Motor neuron (in vitro differentiated cells): ENCODE measurements at regions of chr16 and their contacts with region 1.

Region 1: DNA sequence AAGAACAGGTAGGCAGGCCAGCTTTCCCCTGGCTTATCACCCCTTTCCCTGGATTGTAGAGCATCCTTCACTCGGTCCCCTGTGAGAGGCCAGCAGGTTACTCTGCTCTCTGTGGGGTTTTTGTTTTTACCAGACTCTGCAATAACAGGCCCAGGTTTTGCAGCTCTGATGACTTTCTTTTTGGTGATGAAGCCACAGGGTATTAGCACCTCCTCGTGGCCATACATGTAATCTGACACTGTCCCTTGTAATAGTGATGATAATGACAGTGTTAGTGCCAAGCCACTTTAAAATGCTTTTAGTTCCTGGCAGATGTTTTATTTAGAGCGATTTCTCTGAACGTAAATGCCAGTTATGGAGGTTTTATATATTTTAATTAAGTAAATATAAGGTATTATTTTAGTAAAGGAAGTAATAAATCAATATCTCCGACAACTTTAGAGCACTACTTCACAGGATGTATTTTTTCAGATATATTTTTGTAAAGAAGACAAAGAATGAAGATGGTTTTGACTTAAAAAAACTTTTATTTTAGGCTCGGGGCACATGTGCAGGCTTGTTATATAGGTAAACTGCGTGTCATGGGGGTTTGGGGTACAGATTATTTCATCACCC is 38.0 kb upstream of the CPHXL start:
- ATAC-seq: peak; percentile 90 to 99 (median 94)
- H3K4me3 ChIP-seq: no peak overlapping the region
- H3K27ac ChIP-seq: no peak overlapping the region
- H3K4me1 ChIP-seq: peaks cover 15 to 17% of the 10 kb centered on the region in 2 donors

Region 2: DNA sequence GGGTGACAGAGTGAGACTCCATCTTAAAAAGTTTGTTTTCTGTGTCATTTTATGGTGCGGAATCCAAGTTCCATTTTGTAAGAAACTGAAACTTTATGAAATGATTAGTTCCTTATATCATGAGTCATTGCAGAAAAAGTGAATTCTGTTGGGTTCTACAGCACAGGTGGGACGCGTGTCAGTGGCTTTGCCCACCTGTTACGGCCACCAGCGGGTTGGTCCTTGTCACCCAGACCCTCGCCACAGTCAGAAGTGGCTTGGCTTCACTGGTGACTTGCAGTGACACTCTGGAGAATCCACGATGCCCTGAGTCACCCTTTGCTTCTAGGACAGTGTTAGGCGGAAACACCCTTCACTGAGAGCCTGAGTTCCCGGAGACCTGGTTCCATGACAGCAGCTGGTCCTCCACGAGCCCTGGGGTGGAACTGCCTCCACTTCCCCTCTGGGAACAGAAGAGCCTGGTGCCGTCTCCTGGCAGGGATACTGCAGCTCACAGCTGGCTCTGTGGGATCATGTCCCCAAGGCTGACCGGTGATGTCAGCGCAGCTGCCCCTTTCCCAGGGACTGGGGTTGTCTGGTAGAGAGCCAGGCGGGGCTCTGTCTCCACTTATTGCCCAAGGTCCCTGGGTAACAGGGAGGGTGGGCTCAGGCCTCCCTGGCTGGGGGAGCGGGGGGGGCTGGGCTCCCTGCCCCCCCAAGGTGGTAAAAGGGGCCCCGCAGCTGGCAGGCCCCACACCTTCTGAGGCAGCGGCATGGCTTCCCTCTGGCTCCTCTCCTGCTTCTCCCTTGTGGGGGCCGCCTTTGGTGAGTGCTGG is 545.8 kb before region 1 on chr16 and contains the start of gene CTRB1:
- in situ Hi-C with region 1: loop called in 1 of 9 experiments (anchors 25 kb)
- ATAC-seq: peak in 1 of 8 experiments; percentile 36
- H3K4me3 ChIP-seq: no peak within 1 kb of the TSS
- H3K27ac ChIP-seq: no peak within 1 kb of the TSS
- H3K4me1 ChIP-seq: no peaks in the 10 kb centered on the region
- total RNA-seq, gene CTRB1: 0.11 to 1.5 (median 0.41) TPM

Region 3: GRCh38 chr16:75464130-75464918 is 299.9 kb before region 1 on chr16 and contains the start of gene TMEM170A:
- in situ Hi-C with region 1: loop called in 1 of 9 experiments (anchors 25 kb)
- ATAC-seq: peak; percentile 91 to 97 (median 95)
- H3K4me3 ChIP-seq: peak within 1 kb of the TSS; percentile 56 to 92 (median 79)
- H3K27ac ChIP-seq: peak within 1 kb of the TSS; percentile 80 to 89
- H3K4me1 ChIP-seq: peaks cover 7 to 13% of the 10 kb centered on the region in 2 donors
- total RNA-seq, gene TMEM170A: 7.9 to 24.2 (median 17.1) TPM

Region 4: DNA sequence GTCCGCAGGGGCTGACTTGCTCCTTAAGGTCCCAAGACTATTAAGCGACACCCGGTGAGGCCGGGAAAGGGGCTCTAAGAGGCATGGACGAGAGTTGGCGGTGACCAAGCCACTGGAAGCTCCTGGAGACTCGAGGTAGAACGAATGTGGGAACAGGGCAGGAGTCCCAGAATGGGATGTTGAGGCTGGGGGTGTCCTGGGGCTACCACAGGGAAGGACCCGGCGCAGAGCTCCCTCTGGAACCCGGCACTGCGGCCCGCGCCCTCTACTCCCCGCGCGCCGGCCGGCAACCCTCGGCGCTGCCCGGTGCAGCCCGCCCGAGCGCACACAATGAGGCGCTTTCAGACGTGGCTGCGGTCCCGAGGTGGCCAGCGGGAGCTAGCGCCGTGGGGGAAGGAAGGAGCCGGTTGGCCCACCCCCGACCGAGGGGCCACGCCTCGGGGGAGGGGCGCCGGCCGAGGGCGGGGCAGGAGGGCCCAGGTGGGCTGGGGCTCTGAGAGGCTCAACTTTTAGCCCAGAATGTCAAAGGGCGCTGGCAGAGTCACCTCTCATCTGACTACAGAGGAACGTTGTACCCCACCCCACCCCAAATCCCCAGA is 269.1 kb before region 1 on chr16 and contains the start of gene CHST6:
- in situ Hi-C with region 1: loop called in 2 of 9 experiments (anchors 25 kb)
- ATAC-seq: peak; percentile 32 to 90 (median 66)
- H3K4me3 ChIP-seq: peak within 1 kb of the TSS; percentile 20 to 39 (median 33)
- H3K27ac ChIP-seq: no peak within 1 kb of the TSS
- H3K4me1 ChIP-seq: peaks cover 0 to 5% of the 10 kb centered on the region in 2 donors
- total RNA-seq, gene CHST6: 0.10 to 9.6 (median 0.49) TPM

Region 5: GRCh38 chr16:75506567-75506966 is 257.7 kb before region 1 on chr16:
- in situ Hi-C with region 1: loop called in 1 of 9 experiments (anchors 25 kb)
- ATAC-seq: peak in 7 of 8 experiments; percentile 21 to 95 (median 44)
- H3K4me3 ChIP-seq: no peak overlapping the region
- H3K27ac ChIP-seq: peak overlapping the region in 1 of 2 donors; percentile 37
- H3K4me1 ChIP-seq: peaks cover 10 to 12% of the 10 kb centered on the region in 2 donors

Region 6: GRCh38 chr16:75647492-75648264 is 116.6 kb before region 1 on chr16 and contains the starts of genes KARS1 and TERF2IP:
- in situ Hi-C with region 1: loop called in 3 of 9 experiments (anchors 10 to 25 kb)
- ATAC-seq: peak; percentile 86 to 95 (median 94)
- H3K4me3 ChIP-seq: peak within 1 kb of the TSS; percentile 59 to 100 (median 75)
- H3K27ac ChIP-seq: peak within 1 kb of the TSS; percentile 93 to 98
- H3K4me1 ChIP-seq: peaks cover 8 to 15% of the 10 kb centered on the region in 2 donors
- total RNA-seq, gene KARS1: 106 to 187 (median 127) TPM
- total RNA-seq, gene TERF2IP: 55.4 to 212 (median 150) TPM

Region 7: DNA sequence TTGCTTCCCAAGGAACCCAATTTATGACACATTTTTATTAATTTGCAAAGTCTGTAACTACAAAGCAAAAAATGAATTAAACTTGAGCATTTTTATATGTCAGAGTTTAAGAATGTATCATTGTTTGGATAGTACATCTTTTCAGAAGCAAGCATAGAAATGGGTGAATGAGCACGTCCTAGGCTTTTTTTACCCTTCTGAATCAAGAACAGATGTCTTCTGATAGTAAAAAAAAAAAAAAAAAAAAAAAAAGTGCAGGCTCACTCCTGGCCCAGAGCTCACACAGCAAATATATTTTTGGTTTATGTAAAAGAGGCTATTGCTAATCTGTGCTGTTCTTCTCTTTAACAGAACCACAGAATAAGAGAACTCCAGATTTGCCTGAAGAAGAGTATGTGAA is 110.3 kb before region 1 on chr16:
- in situ Hi-C with region 1: loop called in 3 of 9 experiments (anchors 10 to 25 kb)
- ATAC-seq: peak in 3 of 8 experiments; percentile 34 to 67 (median 53)
- H3K4me3 ChIP-seq: no peak overlapping the region
- H3K27ac ChIP-seq: no peak overlapping the region
- H3K4me1 ChIP-seq: peaks cover 6 to 22% of the 10 kb centered on the region in 2 donors

Region 8: DNA sequence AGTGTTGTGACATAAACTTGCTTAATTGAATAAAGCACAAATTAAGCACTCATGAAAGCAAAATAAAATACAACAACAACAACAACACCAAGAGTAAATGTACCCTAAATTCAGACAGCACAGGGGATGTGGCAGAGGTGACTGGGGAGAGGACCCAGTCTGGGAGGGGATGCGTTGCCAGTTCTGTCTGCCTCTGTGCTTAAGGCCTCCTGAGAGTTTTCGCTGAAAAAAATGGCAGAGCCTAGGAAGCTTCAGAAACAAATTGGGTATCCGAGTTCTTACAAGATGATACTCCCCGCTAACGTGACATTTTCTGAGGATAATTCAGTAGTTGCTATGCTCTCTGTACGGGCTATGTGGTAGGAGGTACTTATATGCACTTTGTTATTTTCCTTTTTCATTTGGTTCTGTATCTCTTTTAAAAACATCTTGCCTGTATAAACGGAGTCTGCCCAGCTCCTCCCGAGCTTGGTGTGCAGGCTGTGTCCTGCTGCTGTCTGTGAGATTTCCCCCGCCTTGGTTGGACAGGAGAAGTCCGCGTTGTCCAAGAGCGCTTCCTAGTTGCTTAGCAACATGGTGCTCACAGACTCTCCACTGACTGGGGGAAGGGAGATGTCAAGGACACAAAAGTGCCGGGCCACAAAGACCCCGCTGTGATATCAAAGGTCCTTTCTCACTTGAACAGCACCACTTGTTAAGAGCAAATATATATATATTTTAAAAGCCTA is 96.2 kb after region 1 on chr16:
- in situ Hi-C with region 1: no loop called
- ATAC-seq: peak in 7 of 8 experiments; percentile 65 to 100 (median 100)
- H3K4me3 ChIP-seq: peak overlapping the region in 4 of 5 donors; percentile 17 to 24 (median 20)
- H3K27ac ChIP-seq: no peak overlapping the region
- H3K4me1 ChIP-seq: peaks cover 22 to 23% of the 10 kb centered on the region in 2 donors

Region 9: GRCh38 chr16:75938818-75939217 is 174.6 kb after region 1 on chr16:
- in situ Hi-C with region 1: no loop called
- ATAC-seq: peak in 2 of 8 experiments; percentile 35
- H3K4me3 ChIP-seq: no peak overlapping the region
- H3K27ac ChIP-seq: no peak overlapping the region
- H3K4me1 ChIP-seq: no peaks in the 10 kb centered on the region